Heart right ventricle (tissue), 16 donors: ENCODE measurements at regions of chr4 and their contacts with region 1.

Region 1: DNA sequence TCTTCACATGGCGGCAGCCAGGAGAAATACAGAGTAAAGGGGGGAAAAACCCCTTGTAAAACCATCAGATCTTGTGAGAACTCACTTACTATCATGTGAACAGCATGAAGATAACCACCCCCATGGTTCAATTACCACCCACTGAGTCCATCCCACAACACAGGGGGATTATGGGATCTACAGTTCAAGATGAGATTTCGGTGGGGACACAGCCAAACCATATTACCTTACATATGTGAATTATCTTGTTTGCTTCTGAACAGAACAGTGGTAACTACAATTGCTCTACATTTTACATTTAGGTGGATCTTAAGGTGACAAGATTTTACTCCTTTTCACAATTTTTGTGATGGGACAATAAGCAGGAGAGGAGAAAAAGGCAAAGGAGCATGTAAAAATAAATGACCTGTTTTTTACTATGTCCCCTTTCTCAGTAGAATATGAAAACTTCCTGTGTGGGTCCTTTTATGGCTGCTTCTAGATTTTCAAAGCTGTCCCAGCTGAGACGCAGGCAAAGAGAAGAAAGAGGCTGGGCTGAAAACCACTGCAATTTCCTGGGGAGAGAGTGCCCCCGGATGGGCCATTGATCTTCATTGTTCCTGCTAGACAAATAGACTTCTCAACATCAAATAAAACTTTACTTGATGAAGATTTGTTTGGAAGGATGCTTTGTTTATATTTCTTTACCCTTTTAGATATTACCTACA is 45.9 kb upstream of the PGM2 start:
- DNase-seq: peak in 1 of 2 donors; percentile 31
- ATAC-seq: peak in 3 of 8 donors; percentile 44 to 69 (median 67)
- H3K4me3 ChIP-seq: no peak overlapping the region
- H3K27ac ChIP-seq: peak overlapping the region in 1 of 10 donors; percentile 19
- H3K4me1 ChIP-seq: peaks cover 0 to 8% (median 0%) of the 10 kb centered on the region in 9 donors
- H3K27me3 ChIP-seq: no peaks in the 10 kb centered on the region
- CTCF ChIP-seq: peak in 6 of 9 donors; percentile 21 to 40 (median 38)

Region 2: GRCh38 chr4:37693450-37694190 is 87.0 kb before region 1 on chr4:
- intact Hi-C with region 1: loop called in 1 of 10 experiments (anchors 10 kb)
- DNase-seq: no peak
- ATAC-seq: no peak
- H3K4me3 ChIP-seq: no peak overlapping the region
- H3K27ac ChIP-seq: no peak overlapping the region
- H3K4me1 ChIP-seq: no peaks in the 10 kb centered on the region
- H3K27me3 ChIP-seq: no peaks in the 10 kb centered on the region
- CTCF ChIP-seq: no peak